Activated naive CD4-positive, alpha-beta T cell treated with anti-CD3 and anti-CD28 coated beads for 36 hours (primary cell): ENCODE measurements at regions of chr3 and their contacts with region 1.

Region 1: GRCh38 chr3:56915966-56916586 is 114.3 kb upstream of the ARHGEF3 start:
- DNase-seq: peak; percentile 86
- H3K4me3 Mint-ChIP-seq: peak overlapping the region; percentile 86
- H3K27ac Mint-ChIP-seq: peak overlapping the region; percentile 92
- H3K4me1 Mint-ChIP-seq: peaks cover 72% of the 10 kb centered on the region
- H3K27me3 Mint-ChIP-seq: no peaks in the 10 kb centered on the region

Region 2: GRCh38 chr3:56556908-56557830 is 358.9 kb before region 1 on chr3 and contains the start of gene CCDC66:
- CTCF ChIA-PET with region 1: no interaction called
- intact Hi-C with region 1: loop called (anchors 5 kb)
- DNase-seq: peak; percentile 97
- H3K4me3 Mint-ChIP-seq: peak within 1 kb of the TSS; percentile 94
- H3K27ac Mint-ChIP-seq: peak within 1 kb of the TSS; percentile 97
- H3K4me1 Mint-ChIP-seq: peaks cover 26% of the 10 kb centered on the region
- H3K27me3 Mint-ChIP-seq: no peaks in the 10 kb centered on the region
- total RNA-seq, gene CCDC66: 29.0 to 29.3 TPM

Region 3: GRCh38 chr3:56783644-56784447 is 132.2 kb before region 1 on chr3:
- CTCF ChIA-PET with region 1: interaction called, 3 read pairs
- intact Hi-C with region 1: loop called (anchors 1 kb)
- DNase-seq: peak; percentile 88
- H3K4me3 Mint-ChIP-seq: peak overlapping the region; percentile 70
- H3K27ac Mint-ChIP-seq: peak overlapping the region; percentile 98
- H3K4me1 Mint-ChIP-seq: peaks cover 95% of the 10 kb centered on the region
- H3K27me3 Mint-ChIP-seq: no peaks in the 10 kb centered on the region

Region 4: DNA sequence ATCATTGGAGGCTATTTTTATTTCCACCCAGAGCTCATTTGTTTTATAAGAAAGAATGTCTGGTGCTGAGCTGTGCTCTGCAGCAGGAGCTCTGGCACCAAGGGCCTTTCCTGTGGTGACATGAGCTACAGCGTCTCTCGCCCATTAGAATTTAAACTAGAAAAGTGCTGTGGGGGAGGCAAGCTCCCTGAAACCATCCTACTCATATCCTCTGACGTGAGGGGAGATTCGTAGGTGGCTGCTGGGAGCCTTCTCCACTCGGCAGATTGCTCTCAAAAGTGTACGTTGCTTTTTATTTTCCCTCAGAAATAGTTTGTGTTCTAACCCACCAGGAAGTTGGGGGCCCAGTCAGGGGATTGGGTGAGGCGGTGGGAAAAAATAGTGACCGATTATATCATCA is 38.0 kb before region 1 on chr3:
- CTCF ChIA-PET with region 1: interaction called, 14 read pairs
- intact Hi-C with region 1: loop called (anchors 1 kb)
- DNase-seq: peak; percentile 84
- H3K4me3 Mint-ChIP-seq: peak overlapping the region; percentile 52
- H3K27ac Mint-ChIP-seq: peak overlapping the region; percentile 94
- H3K4me1 Mint-ChIP-seq: peaks cover 90% of the 10 kb centered on the region
- H3K27me3 Mint-ChIP-seq: no peaks in the 10 kb centered on the region

Region 5: GRCh38 chr3:56900801-56901200 is 15.3 kb before region 1 on chr3:
- CTCF ChIA-PET with region 1: interaction called, 5 read pairs
- intact Hi-C with region 1: loop called (anchors 1 kb)
- DNase-seq: no peak
- H3K4me3 Mint-ChIP-seq: no peak overlapping the region
- H3K27ac Mint-ChIP-seq: no peak overlapping the region
- H3K4me1 Mint-ChIP-seq: peaks cover 64% of the 10 kb centered on the region
- H3K27me3 Mint-ChIP-seq: no peaks in the 10 kb centered on the region

Region 6: GRCh38 chr3:56980798-56981390 is 64.8 kb after region 1 on chr3:
- CTCF ChIA-PET with region 1: no interaction called
- intact Hi-C with region 1: loop called (anchors 1 kb)
- DNase-seq: peak; percentile 82
- H3K4me3 Mint-ChIP-seq: no peak overlapping the region
- H3K27ac Mint-ChIP-seq: peak overlapping the region; percentile 65
- H3K4me1 Mint-ChIP-seq: peaks cover 25% of the 10 kb centered on the region
- H3K27me3 Mint-ChIP-seq: no peaks in the 10 kb centered on the region

Region 7: DNA sequence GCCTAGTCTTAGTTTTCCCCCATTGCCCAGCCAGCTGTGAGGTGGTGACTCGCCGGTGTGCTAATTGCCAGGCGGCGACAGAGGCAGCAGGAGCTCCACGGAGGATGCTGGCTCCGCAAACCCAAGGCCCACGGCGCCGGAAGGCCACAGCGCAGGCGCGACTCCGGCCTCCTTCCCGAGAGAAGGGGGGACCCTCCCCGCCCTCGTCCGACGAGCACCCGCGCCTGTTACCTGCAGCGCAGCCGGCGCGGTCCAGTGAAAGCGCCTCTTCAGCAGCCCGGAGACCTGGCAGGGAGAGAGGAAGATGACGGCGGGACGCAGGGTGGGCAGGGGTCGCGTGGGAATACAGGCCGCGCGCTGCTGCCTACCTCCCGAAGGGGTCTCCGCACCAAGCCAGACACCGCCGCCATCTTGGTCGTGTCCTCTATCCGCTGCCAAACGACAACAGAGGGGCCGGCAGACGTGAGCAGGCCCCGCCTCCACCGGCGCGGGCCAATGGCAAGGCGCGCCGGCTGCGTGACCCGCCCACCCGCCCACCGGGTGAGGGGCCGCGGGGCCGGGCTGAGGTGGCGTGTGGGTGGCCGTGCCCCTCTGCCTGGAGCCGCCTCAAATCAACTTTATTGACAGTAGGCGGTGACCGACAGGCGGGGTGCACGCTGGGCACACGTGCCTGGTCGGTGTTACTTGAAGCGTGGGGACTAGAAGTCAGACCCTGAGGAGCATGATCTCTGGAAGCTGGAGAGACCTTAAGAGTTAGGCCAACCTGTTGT is 1517.5 kb after region 1 on chr3 and contains the start of gene PDHB:
- CTCF ChIA-PET with region 1: no interaction called
- intact Hi-C with region 1: no loop called
- DNase-seq: peak; percentile 89
- H3K4me3 Mint-ChIP-seq: peak within 1 kb of the TSS; percentile 91
- H3K27ac Mint-ChIP-seq: peak within 1 kb of the TSS; percentile 92
- H3K4me1 Mint-ChIP-seq: peaks cover 20% of the 10 kb centered on the region
- H3K27me3 Mint-ChIP-seq: no peaks in the 10 kb centered on the region
- total RNA-seq, gene PDHB: 51.6 to 53.7 TPM